ENCODE measurements at regions of chr5 and their contacts with region 1.

Region 1: DNA sequence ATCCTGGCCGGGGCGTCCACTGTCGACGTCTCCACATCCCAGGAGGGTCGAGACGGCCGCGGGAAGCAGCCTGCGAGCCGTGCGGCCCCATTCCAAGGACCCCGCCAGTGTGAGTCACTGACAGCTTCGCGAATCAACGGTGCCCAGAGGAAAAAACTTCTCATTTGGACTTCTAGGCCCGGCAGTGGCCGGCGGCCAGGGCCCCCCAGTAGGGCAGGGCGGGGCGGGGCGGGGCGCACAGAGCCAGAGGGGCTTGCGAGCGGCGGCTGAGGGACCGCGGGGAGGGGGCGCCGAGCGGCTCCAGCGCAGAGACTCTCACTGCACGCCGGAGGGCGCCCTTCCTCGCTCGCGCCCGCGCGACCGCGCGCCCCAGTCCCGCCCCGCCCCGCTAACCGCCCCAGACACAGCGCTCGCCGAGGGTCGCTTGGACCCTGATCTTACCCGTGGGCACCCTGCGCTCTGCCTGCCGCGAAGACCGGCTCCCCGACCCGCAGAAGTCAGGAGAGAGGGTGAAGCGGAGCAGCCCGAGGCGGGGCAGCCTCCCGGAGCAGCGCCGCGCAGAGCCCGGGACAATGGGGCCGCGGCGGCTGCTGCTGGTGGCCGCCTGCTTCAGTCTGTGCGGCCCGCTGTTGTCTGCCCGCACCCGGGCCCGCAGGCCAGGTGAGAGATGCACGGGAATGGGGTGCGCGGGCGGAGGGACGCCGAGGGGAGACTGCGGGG is at the start of gene F2R:
- DNase-seq: peak; percentile 57
- H3K4me3 Mint-ChIP-seq: peak within 1 kb of the TSS; percentile 79
- H3K27ac Mint-ChIP-seq: peak within 1 kb of the TSS; percentile 66
- H3K4me1 Mint-ChIP-seq: peaks cover 29% of the 10 kb centered on the region
- H3K27me3 Mint-ChIP-seq: no peaks in the 10 kb centered on the region
- CTCF ChIP-seq: peak; percentile 65
- total RNA-seq, gene F2R: 17.3 and 17.6 TPM in 2 replicates

Region 2: GRCh38 chr5:76473661-76474060 is 242.2 kb before region 1 on chr5:
- CTCF ChIA-PET with region 1: no interaction called
- POLR2A ChIA-PET with region 1: no interaction called
- intact Hi-C with region 1: no loop called
- DNase-seq: no peak
- H3K4me3 Mint-ChIP-seq: no peak overlapping the region
- H3K27ac Mint-ChIP-seq: no peak overlapping the region
- H3K4me1 Mint-ChIP-seq: peaks cover 22% of the 10 kb centered on the region
- H3K27me3 Mint-ChIP-seq: no peaks in the 10 kb centered on the region
- CTCF ChIP-seq: no peak

Region 3: DNA sequence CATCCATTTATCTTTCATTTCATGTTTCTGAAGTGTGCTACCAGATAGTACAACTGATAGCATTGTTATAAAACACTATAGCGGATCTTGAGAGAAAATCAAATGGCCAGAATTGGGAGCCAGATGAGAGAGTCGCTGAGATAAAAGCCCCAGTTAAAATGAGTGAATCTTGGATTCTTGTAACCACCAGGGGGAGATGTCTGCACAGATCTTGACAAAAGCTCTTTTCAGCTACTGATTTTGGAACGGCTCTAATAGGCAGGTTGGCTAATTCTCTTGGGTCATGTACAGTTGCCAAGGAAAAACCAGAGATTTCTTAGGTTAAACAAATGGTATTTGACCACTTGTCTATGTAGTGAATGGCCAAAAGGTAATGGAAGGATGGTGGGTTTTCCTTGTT is 114.4 kb before region 1 on chr5:
- CTCF ChIA-PET with region 1: interaction called, 3 read pairs
- POLR2A ChIA-PET with region 1: interaction called, 4 read pairs
- intact Hi-C with region 1: loop called (anchors 1 kb)
- DNase-seq: peak; percentile 83
- H3K4me3 Mint-ChIP-seq: no peak overlapping the region
- H3K27ac Mint-ChIP-seq: no peak overlapping the region
- H3K4me1 Mint-ChIP-seq: peaks cover 25% of the 10 kb centered on the region
- H3K27me3 Mint-ChIP-seq: no peaks in the 10 kb centered on the region
- CTCF ChIP-seq: peak; percentile 63

Region 4: DNA sequence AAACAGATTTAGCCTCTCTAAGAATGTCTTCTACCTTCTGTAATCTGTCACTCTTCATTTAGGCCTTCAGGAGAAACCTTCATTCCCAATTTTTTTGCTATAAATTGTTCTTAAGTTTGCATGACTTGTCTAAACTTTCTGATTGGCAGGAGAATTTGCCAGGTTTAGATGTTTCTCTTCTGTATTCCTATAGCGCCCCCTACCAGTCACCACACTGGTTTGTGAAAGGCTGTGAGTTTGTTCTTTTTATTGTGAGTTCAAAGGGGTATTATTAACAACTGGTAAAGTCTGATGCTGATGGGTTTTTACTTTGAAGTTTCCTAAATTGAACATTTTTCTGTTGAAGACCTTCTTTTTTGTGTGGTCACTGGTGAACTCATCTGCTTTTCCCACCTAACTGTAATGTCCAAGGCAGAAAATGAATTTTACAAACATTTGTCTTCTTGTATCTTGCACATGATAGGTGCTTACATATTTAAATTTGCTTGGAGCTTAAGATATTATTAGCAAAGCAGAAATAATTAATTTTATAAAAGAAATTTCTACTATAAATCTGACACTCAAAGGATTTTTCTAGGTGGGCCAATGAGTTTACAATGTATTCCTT is 74.3 kb before region 1 on chr5:
- CTCF ChIA-PET with region 1: interaction called, 4 read pairs
- POLR2A ChIA-PET with region 1: no interaction called
- intact Hi-C with region 1: loop called (anchors 2 kb)
- DNase-seq: peak; percentile 83
- H3K4me3 Mint-ChIP-seq: no peak overlapping the region
- H3K27ac Mint-ChIP-seq: no peak overlapping the region
- H3K4me1 Mint-ChIP-seq: peaks cover 17% of the 10 kb centered on the region
- H3K27me3 Mint-ChIP-seq: no peaks in the 10 kb centered on the region
- CTCF ChIP-seq: peak; percentile 57

Region 5: GRCh38 chr5:76701298-76701697 is 14.6 kb before region 1 on chr5:
- CTCF ChIA-PET with region 1: interaction called, 6 read pairs
- POLR2A ChIA-PET with region 1: interaction called, 60 read pairs
- intact Hi-C with region 1: no loop called
- DNase-seq: peak; percentile 99
- H3K4me3 Mint-ChIP-seq: no peak overlapping the region
- H3K27ac Mint-ChIP-seq: peak overlapping the region; percentile 88
- H3K4me1 Mint-ChIP-seq: peaks cover 27% of the 10 kb centered on the region
- H3K27me3 Mint-ChIP-seq: no peaks in the 10 kb centered on the region
- CTCF ChIP-seq: no peak

Region 6: GRCh38 chr5:76754668-76755078 is 38.8 kb after region 1 on chr5:
- CTCF ChIA-PET with region 1: interaction called, 3 read pairs
- POLR2A ChIA-PET with region 1: interaction called, 5 read pairs
- intact Hi-C with region 1: loop called (anchors 5 kb)
- DNase-seq: peak; percentile 58
- H3K4me3 Mint-ChIP-seq: no peak overlapping the region
- H3K27ac Mint-ChIP-seq: no peak overlapping the region
- H3K4me1 Mint-ChIP-seq: peaks cover 19% of the 10 kb centered on the region
- H3K27me3 Mint-ChIP-seq: no peaks in the 10 kb centered on the region
- CTCF ChIP-seq: no peak

Region 7: DNA sequence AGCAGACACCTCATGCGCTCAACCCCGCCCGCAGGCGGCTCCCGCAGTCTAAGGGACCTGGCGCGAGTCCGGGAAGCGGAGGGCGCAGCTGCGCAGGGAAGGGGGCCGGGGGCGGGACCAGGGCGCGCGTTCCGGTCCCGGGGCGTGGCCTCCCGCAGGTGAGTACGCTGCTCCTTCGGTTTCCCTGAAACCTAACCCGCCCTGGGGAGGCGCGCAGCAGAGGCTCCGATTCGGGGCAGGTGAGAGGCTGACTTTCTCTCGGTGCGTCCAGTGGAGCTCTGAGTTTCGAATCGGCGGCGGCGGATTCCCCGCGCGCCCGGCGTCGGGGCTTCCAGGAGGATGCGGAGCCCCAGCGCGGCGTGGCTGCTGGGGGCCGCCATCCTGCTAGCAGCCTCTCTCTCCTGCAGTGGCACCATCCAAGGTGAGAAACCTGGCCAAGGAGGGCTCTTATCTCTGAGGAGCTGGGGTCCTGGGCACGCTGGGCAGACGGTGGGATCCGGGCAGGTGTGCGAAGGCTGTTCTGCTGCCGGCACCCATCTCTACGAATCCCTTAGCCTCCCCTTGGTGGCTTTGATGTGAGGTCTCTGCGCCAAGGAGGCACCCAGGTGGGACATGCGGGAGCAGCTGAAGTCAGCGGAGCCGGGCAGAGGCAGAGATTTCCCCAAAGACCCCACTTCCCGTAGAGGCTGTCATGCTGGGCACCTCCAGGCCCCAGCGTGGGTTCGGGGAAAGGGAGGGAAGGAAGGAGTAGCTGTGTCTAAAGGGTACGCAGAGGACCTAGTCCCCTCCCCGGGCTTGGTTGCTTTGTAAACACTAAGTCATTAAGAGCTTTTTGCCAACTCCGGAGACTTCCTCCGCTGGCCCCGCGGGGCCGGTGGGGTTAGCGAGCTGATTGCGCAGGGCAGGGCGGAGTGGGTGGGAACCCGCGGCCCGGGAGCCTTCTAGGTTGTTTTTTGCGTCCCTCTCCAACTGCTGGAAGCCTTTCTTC is 103.2 kb after region 1 on chr5 and contains the start of gene F2RL1:
- CTCF ChIA-PET with region 1: no interaction called
- POLR2A ChIA-PET with region 1: interaction called, 14 read pairs
- intact Hi-C with region 1: no loop called
- DNase-seq: peak; percentile 94
- H3K4me3 Mint-ChIP-seq: peak within 1 kb of the TSS; percentile 91
- H3K27ac Mint-ChIP-seq: peak within 1 kb of the TSS; percentile 79
- H3K4me1 Mint-ChIP-seq: peaks cover 30% of the 10 kb centered on the region
- H3K27me3 Mint-ChIP-seq: no peaks in the 10 kb centered on the region
- CTCF ChIP-seq: no peak
- total RNA-seq, gene F2RL1: 30.7 and 34.9 TPM in 2 replicates

Region 8: GRCh38 chr5:76867827-76868693 is 152.2 kb after region 1 on chr5:
- CTCF ChIA-PET with region 1: no interaction called
- POLR2A ChIA-PET with region 1: no interaction called
- intact Hi-C with region 1: loop called (anchors 1 kb)
- DNase-seq: peak; percentile 74
- H3K4me3 Mint-ChIP-seq: no peak overlapping the region
- H3K27ac Mint-ChIP-seq: no peak overlapping the region
- H3K4me1 Mint-ChIP-seq: no peaks in the 10 kb centered on the region
- H3K27me3 Mint-ChIP-seq: no peaks in the 10 kb centered on the region
- CTCF ChIP-seq: peak; percentile 87